ENCODE measurements at regions of chrX and their contacts with region 1.

Region 1: DNA sequence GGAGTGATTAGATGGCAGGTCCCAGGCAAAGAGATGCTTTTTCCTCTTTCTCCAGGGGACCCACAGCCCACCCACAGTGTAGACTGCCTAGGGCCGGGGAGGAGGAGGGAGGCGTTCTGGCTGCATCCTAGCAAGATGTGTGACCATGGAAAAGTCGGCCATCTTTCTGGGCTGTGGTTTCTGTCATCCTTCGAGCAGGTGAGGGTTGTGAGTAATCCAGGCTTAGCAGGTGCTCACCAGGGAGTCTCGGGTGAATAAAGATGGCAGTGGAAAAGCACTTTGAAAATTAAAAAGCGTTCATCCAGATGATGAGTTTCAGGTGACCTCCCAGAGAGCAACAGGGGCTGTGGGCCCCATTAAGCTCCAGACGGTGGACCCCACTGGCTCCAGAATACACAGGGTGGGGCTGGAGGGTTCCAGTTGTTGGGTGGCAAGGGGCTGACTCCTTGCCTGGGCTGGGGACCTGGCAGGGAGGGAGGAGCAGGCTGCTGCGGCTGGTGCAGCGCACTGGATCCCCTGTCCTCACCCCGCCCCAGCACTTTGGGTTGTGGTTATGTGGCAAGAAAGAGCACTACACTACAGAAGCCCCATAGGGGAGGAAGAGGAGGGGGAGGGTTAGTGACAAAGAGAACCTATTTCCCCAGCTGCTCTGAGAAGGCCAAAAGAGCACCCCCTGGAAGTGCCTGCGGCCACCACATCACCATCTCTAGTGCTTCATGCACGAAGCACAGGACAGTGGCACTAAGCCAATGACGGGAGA is 23.7 kb downstream of the ELF4 start:
- DNase-seq: peak; percentile 82
- H3K4me3 Mint-ChIP-seq: peak overlapping the region; percentile 51
- H3K27ac Mint-ChIP-seq: peak overlapping the region; percentile 90
- H3K4me1 Mint-ChIP-seq: peaks cover 69% of the 10 kb centered on the region
- H3K27me3 Mint-ChIP-seq: no peaks in the 10 kb centered on the region

Region 2: DNA sequence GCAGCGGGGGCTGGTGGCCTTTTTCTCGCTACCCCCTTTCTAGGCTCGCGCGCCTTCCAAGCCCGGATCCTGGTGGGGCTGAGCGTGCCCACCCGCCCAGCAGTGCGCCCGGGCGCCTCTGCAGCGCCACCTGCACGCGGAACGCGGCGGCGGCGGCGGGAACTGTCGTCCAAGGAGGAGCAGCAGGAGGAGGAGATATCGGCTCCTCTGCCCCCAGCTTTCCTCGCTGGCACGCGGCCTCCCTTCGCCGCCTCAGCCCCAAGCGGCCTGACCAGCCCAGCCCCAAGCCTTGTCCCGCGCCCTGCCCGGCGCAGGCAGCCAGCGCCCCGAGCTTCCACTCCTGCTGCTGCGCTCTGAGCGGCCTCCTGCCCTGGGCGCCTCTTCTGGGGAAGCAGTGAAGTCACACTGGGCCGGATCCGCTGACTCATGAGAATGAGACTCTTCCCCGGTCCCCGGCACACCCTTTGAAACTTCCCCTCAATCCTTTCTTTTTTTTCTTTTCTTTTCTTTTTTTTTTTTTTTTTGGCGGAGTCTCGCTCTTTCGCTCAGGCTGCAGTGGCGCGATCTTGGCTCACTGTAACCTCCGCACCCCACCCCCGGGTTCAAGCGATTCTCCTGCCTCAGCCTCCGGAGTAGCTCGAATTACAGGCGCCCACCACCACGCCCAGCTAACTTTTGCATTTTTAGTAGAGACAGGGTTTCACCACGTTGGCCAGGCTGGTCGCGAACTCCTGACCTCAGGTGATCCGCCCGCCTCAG is 34.3 kb after region 1 on chrX:
- CTCF ChIA-PET with region 1: interaction called, 125 read pairs
- POLR2A ChIA-PET with region 1: interaction called, 17 read pairs
- intact Hi-C with region 1: loop called (anchors 1 kb)
- DNase-seq: peak; percentile 76
- H3K4me3 Mint-ChIP-seq: peak overlapping the region; percentile 64
- H3K27ac Mint-ChIP-seq: peak overlapping the region; percentile 74
- H3K4me1 Mint-ChIP-seq: peaks cover 24% of the 10 kb centered on the region
- H3K27me3 Mint-ChIP-seq: no peaks in the 10 kb centered on the region

Region 3: GRCh38 chrX:130144509-130144908 is 57.9 kb after region 1 on chrX:
- CTCF ChIA-PET with region 1: no interaction called
- POLR2A ChIA-PET with region 1: no interaction called
- intact Hi-C with region 1: no loop called
- DNase-seq: no peak
- H3K4me3 Mint-ChIP-seq: no peak overlapping the region
- H3K27ac Mint-ChIP-seq: no peak overlapping the region
- H3K4me1 Mint-ChIP-seq: no peaks in the 10 kb centered on the region
- H3K27me3 Mint-ChIP-seq: no peaks in the 10 kb centered on the region